Activated CD4-positive, alpha-beta memory T cell treated with anti-CD3 and anti-CD28 coated beads for 36 hours (primary cell): ENCODE measurements at regions of chr12 and their contacts with region 1.

Region 1: DNA sequence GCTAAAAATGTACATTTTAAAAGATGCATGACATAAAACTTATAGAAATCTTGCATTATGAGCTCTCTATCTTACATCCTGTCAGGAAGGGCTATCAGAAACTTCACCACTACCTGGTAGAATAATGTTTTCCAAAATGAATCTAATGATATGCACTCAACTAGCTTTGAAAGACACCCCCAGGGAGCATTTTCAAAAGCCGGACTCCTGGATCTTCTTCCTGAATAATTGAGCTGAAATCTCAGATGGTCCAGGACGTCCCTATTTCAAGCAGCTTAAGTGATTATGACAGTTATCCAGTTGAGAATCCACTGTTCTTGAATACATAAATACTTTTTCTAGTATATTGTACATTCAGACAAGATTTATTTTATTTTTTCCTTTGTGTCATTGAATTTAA is 200.6 kb upstream of the MGAT4C start:
- DNase-seq: no peak
- H3K4me3 Mint-ChIP-seq: no peak overlapping the region
- H3K27ac Mint-ChIP-seq: no peak overlapping the region
- H3K4me1 Mint-ChIP-seq: no peaks in the 10 kb centered on the region
- H3K27me3 Mint-ChIP-seq: no peaks in the 10 kb centered on the region

Region 2: DNA sequence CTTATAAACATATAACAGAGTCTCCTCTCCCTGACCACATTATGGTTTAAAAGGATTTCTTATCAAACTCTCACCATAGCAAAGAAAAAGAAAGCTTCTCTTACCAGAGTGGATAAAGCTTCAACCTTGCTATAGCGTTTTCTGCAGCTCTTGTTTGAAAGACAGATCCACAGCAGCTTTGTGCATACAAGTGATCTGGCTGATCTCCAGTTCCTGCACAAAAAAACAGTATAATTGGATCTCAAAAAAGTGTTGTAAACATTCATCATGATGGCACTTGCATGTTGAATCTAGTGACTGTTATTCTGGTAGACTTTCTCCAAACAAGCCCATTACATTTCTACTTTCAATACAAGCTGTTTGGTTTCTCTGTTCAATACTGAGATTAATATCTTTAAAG is 21.7 kb before region 1 on chr12:
- CTCF ChIA-PET with region 1: no interaction called
- POLR2A ChIA-PET with region 1: no interaction called
- intact Hi-C with region 1: loop called (anchors 1 kb)
- DNase-seq: no peak
- H3K4me3 Mint-ChIP-seq: no peak overlapping the region
- H3K27ac Mint-ChIP-seq: no peak overlapping the region
- H3K4me1 Mint-ChIP-seq: no peaks in the 10 kb centered on the region
- H3K27me3 Mint-ChIP-seq: no peaks in the 10 kb centered on the region

Region 3: DNA sequence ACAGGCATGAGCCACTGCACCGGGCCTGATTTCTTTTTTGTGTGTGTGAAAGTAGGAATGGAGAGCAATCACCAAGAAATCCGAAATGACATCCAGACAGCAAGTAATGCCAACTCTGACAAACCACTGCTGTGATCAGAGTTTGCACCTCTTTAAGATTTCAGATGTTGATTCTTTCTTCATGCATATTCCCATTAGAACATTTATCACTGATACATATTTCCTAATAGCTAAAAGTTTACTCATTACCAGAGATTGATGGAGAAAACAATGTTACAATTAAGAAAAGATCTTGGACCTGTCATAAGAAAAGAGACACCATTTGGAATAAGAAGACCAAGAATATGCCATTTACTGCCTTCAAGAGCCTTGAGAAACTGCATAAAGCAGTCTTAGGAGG is 16.5 kb after region 1 on chr12:
- CTCF ChIA-PET with region 1: no interaction called
- POLR2A ChIA-PET with region 1: no interaction called
- intact Hi-C with region 1: no loop called
- DNase-seq: no peak
- H3K4me3 Mint-ChIP-seq: no peak overlapping the region
- H3K27ac Mint-ChIP-seq: no peak overlapping the region
- H3K4me1 Mint-ChIP-seq: no peaks in the 10 kb centered on the region
- H3K27me3 Mint-ChIP-seq: no peaks in the 10 kb centered on the region